Breast epithelium (tissue), 4 donors: ENCODE measurements at regions of chr11 and their contacts with region 1.

Region 1: GRCh38 chr11:34585735-34586487 is 35.0 kb upstream of the EHF start:
- DNase-seq: no peak
- H3K4me3 ChIP-seq: peak overlapping the region in 2 of 3 donors; percentile 12 to 34
- H3K27ac ChIP-seq: peak overlapping the region; percentile 48 to 63
- H3K4me1 ChIP-seq: peaks cover 0 to 10% of the 10 kb centered on the region in 2 donors
- H3K27me3 ChIP-seq: no peaks in the 10 kb centered on the region
- CTCF ChIP-seq: peak; percentile 71 to 88 (median 75)
- POLR2A ChIP-seq: no peak

Region 2: DNA sequence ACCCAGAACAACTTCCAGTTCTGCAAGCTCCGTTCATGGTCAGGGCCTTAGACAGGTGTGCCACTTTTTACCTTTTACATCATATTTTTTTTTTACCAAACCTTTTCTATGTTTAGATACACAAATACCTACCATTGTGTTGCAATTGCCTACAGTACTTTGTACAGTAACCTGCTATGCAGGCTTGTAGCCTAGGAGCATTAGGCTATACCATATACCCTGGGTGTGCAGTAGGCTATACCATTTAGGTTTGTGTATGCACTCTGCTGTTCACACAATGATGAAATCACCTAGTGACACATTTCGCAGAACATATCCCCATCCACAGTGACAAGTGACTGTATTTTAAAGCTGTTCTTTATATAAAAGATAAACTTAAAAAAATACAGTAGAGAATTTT is 300.7 kb after region 1 on chr11:
- intact Hi-C with region 1: loop called (anchors 10 kb)
- DNase-seq: no peak
- H3K4me3 ChIP-seq: no peak overlapping the region
- H3K27ac ChIP-seq: no peak overlapping the region
- H3K4me1 ChIP-seq: peaks cover 0 to 4% of the 10 kb centered on the region in 2 donors
- H3K27me3 ChIP-seq: no peaks in the 10 kb centered on the region
- CTCF ChIP-seq: no peak
- POLR2A ChIP-seq: no peak